Endothelial cell of umbilical vein (primary cell): ENCODE measurements at regions of chr6 and their contacts with region 1.

Region 1: DNA sequence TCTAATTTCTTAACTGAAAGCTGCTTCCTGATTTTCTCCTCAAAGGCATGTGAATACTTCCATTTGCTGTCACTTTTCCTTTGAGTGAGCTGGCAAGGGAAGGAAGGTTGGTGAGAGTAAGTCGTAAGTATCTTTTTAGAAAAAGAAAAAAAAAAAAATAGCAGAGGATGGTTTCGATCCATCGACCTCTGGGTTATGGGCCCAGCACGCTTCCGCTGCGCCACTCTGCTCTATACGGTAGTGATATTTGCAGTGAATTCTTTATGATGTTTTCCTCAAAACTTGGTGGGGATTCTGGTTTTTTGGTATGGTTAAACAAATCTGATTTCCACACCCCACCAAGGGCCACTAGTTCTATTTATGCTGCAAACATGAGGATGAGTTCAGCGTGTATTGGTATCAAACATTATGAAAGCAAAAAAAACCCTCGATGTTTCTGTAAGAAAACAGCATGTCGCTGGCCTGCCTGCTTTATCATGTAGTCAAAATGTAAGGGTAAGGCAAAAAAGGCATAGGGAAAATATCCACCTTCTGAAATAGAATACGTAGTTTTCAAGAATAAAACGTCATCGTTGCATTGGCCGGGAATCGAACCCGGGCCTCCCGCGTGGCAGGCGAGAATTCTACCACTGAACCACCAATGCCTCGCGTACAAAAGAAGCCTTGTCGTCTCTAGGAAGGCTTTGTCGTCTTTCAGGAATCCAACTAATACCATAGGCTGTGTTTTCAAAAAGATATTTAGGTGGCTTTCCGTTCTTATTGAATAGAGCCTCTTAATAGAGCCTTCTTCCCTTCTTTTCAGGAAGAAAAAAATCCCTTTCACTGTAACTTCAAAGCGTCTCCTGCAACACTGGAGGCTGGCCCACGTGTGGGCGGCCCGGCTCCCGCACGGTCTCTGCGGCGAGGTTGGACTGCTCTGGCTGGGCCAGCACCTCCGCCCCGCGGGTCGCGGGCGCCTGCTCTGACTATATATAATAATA is 9.6 kb downstream of the OR2B2 start:
- DNase-seq: peak; percentile 92
- H3K4me3 ChIP-seq: peak overlapping the region; percentile 39 to 91 (median 86)
- H3K27ac ChIP-seq: peak overlapping the region; percentile 37
- H3K4me1 ChIP-seq: no peaks in the 10 kb centered on the region
- H3K27me3 ChIP-seq: peaks cover 0 to 11% of the 10 kb centered on the region in 2 experiments
- CTCF ChIP-seq: no peak
- POLR2A ChIP-seq: no peak

Region 2: DNA sequence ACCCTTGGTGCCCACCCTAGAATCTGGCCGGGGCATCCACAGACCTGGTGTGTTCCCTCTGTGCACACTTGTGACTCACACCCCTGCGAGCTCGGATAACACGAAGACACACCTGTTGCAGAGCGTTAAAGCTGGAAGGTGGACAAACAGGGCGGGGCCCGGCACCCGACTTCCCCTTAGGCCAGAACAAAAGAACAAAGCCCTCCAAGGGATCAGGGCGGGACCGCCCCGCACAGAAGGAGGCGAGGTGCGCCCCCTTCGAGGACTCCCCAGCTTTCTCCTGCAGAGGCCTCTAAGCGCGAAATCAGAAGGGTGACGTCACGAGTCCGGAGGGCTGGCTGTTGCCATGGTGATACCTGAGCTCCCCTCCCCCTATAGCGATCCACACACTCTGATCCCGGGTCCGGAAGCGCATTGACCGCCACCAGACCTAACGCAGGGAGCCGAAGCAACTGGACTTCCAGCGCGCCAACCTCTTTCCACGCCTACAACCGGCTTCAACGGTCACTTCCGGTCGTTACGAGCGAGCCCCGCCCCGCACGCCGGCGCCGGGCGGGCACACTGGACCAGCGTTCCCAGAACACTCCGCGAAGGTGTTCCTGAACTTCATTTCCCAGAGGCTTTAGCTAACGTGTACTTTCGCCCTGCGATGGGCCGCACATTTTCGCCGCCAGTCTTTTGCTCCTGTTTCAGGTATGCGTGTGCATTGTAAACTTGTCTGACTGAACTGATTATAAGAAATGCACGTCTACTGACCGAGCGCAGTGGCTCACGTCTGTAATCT is 429.8 kb before region 1 on chr6 and contains the start of gene ZNF184:
- CTCF ChIA-PET with region 1: no interaction called
- POLR2A ChIA-PET with region 1: no interaction called
- dilution Hi-C with region 1: no loop called
- intact Hi-C with region 1: loop called (anchors 5 kb)
- DNase-seq: peak; percentile 98
- H3K4me3 ChIP-seq: peak within 1 kb of the TSS; percentile 68 to 94 (median 82)
- H3K27ac ChIP-seq: peak within 1 kb of the TSS; percentile 74
- H3K4me1 ChIP-seq: peaks cover 9% of the 10 kb centered on the region
- H3K27me3 ChIP-seq: peaks cover 9 to 14% of the 10 kb centered on the region in 2 experiments
- CTCF ChIP-seq: no peak
- POLR2A ChIP-seq: peak; percentile 84
- total RNA-seq, gene ZNF184: 5.4 and 6.5 TPM in 2 replicates

Region 3: DNA sequence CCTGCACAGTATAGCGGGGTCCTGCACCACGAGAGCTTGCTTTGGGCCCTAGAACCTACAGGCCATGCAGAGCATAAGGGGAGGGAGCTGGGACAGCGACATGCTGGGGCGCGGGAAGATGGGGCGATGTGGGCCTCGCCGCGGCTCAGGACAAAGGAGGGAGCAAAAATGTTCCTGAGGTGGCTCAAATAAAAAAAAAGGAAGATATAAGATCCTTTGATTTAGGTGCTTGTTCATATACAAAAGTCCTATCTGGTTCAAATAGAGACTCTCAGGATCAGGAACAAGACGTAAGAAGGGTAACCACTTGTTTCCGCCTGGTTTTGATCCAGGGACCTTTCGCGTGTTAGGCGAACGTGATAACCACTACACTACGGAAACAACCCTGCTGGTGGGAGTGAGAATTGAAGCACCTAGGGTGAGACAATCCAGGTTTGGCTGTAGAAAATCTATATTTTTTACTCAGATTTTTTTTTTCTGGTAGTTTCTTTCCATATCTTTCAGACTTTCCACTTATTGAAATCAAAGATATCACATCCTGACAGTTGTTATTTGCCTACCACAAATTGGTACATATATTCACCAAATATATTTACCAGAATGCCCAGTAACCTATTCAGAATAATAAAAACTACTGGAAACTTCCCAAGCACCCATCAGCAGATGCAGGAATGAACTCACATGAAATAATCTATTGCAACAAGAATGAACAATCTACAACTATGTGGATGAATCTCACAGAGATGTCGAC is 251.8 kb before region 1 on chr6:
- CTCF ChIA-PET with region 1: no interaction called
- POLR2A ChIA-PET with region 1: no interaction called
- dilution Hi-C with region 1: no loop called
- intact Hi-C with region 1: no loop called
- DNase-seq: peak; percentile 22
- H3K4me3 ChIP-seq: no peak overlapping the region
- H3K27ac ChIP-seq: no peak overlapping the region
- H3K4me1 ChIP-seq: no peaks in the 10 kb centered on the region
- H3K27me3 ChIP-seq: peaks cover 0 to 2% of the 10 kb centered on the region in 2 experiments
- CTCF ChIP-seq: peak in 1 of 2 donors; percentile 17
- POLR2A ChIP-seq: no peak